Activated T-helper 1 cell treated with anti-CD3 and anti-CD28 coated beads, Interleukin-12 subunit alpha, Interleukin-12 subunit beta, Interleukin-2, Interleukin-4 antibody, amounts not matched to agents 30 ng/mL and 10 ng/mL and 1 ng/mL, durations not matched to agents 14 hours and 24 hours and 36 hours (primary cell): ENCODE measurements at regions of chrX and their contacts with region 1.

Region 1: GRCh38 chrX:51892921-51893745 is at the start of gene MAGED1:
- DNase-seq: peak; percentile 69
- H3K4me3 Mint-ChIP-seq: peak within 1 kb of the TSS; percentile 89
- H3K27ac Mint-ChIP-seq: peak within 1 kb of the TSS; percentile 83
- H3K4me1 Mint-ChIP-seq: peaks cover 22% of the 10 kb centered on the region
- H3K27me3 Mint-ChIP-seq: no peaks in the 10 kb centered on the region
- total RNA-seq, gene MAGED1: 32.7 and 34.8 TPM in 2 replicates

Region 2: DNA sequence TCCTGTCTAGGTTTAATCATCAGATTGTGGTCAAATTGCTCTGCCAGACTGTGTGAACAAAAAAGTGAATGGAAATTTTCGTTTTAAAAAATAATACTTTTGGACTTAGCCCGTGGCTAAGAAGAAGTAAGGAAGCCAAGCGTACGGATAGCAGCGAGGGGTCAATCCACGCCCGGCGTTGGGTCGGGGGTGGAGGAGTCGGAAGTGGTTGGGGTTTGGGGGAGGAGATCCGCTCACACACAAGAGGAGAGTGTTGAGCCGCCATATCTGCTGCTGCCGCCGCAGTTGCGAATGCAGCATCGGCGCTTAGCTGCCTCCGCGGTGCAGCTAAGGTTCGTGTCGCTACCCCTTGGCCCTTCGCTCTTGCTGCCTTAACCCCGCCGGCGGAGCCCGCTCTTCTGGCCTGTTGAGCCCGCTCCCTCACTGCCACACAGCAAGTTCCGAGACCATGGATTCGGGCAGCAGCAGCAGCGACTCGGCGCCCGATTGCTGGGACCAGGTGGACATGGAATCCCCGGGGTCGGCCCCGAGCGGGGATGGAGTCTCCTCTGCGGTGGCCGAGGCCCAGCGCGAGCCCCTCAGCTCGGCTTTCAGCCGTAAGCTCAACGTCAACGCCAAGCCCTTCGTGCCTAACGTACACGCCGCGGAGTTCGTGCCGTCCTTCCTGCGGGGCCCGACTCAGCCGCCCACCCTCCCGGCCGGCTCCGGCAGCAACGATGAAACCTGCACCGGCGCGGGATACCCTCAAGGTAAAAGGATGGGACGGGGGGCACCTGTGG is 149.8 kb before region 1 on chrX and contains the start of gene GSPT2:
- intact Hi-C with region 1: loop called (anchors 1 kb)
- DNase-seq: peak; percentile 55
- H3K4me3 Mint-ChIP-seq: peak within 1 kb of the TSS; percentile 88
- H3K27ac Mint-ChIP-seq: peak within 1 kb of the TSS; percentile 67
- H3K4me1 Mint-ChIP-seq: peaks cover 21% of the 10 kb centered on the region
- H3K27me3 Mint-ChIP-seq: peaks cover 10% of the 10 kb centered on the region
- total RNA-seq, gene GSPT2: 12.7 and 13.7 TPM in 2 replicates